AG04449 (cell line): ENCODE measurements at regions of chr1 and their contacts with region 1.

Region 1: GRCh38 chr1:204390751-204391466 is 20.7 kb downstream of the PPP1R15B start:
- DNase-seq: no peak
- H3K4me3 ChIP-seq: no peak overlapping the region
- CTCF ChIP-seq: no peak

Region 2: GRCh38 chr1:204350857-204351573 is 39.9 kb before region 1 on chr1:
- CTCF ChIA-PET with region 1: no interaction called
- POLR2A ChIA-PET with region 1: no interaction called
- DNase-seq: no peak
- H3K4me3 ChIP-seq: peak overlapping the region; percentile 45
- CTCF ChIP-seq: no peak

Region 3: DNA sequence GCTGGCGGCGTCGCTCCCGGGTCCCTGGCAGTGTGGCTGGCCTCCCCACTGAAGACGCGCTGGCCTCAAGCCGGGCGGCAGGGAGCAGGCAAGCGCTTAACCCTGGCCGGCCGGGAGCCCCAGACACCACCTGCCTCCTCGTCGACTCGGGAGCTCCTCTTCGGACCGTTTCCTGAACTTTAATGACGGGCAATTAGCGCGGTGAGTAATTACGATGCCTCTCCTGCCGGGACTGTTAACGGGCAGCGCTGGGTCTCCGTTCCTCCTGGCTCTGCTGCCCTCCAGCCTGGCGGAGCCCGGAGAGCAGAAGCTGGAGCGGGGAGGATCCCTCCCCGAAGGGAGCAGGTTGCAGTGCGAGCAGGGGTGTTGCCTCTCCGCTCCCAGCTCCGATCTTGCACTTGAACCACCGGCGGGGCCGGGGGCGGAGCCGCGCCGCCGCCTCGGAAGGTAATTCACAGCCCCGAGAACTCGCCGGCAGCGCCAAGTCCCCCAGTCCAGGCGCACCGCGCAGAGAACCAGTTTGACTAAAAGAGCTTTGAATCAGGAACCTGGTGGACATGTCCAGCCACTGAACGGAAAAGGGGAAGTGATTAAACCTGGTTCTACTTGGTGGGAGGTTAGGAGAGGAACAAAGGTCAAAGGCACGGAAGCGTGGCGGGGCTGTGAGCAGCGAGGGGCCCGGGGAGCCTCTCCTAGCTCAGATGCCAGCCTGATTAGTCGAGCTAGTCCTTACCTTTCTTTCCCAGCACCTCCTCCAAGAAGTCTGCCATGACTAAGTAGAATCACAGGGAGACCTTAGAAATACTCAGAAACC is 12.9 kb before region 1 on chr1:
- CTCF ChIA-PET with region 1: interaction called, 10 read pairs
- POLR2A ChIA-PET with region 1: no interaction called
- DNase-seq: no peak
- H3K4me3 ChIP-seq: peak overlapping the region; percentile 50
- CTCF ChIP-seq: no peak

Region 4: DNA sequence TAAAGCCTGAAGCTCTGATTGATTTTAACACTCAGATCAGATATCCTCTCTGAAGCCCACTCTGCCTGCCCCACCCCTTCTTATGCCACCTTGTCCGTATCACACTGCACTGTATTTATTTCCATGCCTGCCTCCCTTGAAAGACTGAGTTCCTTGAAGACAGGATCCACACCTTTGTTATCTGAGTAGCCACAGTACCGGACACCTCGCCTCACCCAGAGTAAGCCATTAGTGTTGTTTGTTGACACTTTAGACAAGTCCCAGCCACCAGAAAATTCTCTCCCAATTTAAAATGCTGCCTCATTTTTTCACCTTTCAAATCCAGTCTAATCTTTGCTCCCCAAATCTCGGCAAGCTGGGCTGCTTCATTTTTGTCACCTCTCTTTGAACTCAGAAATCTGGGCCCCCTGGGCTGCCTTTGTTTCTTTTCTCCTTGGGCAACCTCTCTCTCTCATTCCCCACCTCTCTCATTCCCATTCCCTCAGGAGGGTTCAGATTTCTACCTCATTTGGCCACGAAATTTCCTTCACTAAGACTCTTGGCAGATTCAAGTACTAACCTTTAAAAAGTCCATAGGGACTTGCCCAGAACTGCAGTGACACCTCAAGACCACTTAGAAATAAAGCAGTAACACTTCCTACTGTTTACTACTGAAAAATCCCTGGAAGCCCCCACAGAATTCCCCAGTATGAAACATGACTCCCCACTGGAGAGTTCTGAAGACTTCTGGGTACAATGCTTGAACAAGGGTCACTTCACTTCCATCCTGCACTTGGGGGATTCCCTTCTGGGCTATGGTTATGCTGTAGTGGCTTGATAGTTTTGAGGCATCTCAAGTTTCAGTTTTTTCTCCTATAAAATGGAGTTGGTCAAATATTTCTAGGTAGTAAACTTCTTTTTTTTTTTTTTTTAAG is 29.4 kb after region 1 on chr1:
- CTCF ChIA-PET with region 1: no interaction called
- POLR2A ChIA-PET with region 1: no interaction called
- DNase-seq: no peak
- H3K4me3 ChIP-seq: no peak overlapping the region
- CTCF ChIP-seq: no peak